ENCODE measurements at regions of chr3 and their contacts with region 1.

Region 1: DNA sequence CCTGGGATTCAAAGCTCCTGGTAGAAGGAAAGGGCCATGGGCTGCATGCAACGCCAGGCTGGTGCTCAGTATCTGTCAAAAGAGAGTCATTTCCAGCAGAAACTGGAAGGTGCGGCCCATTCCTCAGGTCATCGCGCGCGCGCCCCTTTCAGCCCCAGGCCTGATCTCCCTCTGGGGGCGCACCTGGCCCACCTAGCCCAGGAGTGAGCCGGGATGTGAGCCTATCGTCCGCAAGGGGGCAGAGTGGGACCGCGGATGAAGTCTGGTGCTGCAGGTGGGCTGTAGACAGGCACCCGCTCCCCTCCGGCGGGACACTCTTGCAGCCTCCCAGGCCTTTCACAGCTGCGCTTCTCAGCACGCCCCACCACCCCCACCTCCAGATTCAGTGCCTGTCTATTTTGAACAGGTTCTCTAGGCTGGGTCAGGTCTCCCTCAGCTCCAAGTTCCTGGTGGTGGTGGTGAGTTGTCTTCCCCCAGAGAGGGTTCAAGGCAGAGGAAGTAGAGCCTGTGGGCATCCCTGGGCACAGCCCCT is 5.8 kb upstream of the RPL29 start:
- DNase-seq: peak; percentile 92
- H3K4me3 Mint-ChIP-seq: no peak overlapping the region
- H3K27ac Mint-ChIP-seq: no peak overlapping the region
- H3K4me1 Mint-ChIP-seq: peaks cover 25% of the 10 kb centered on the region
- H3K27me3 Mint-ChIP-seq: peaks cover 72% of the 10 kb centered on the region

Region 2: DNA sequence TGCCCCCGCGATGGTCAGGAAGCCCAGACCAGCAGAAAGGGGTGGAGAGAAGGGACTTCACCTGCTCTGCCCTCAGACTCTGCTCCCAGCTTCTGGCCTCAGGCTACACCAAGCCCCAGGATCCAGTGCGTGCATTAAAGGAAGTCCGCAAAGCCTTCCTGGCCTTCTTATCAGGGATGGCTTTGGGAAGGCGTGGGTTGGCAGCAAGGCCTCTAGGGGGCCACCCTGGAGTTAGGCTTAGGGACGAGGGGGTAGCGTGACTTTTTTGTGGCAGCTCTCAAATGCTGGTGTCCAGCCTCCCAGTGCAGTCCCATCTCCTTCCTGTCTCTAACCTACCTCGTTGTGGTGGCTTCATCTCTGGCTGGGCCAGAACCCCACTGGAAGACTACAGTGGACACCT is 13.1 kb after region 1 on chr3:
- CTCF ChIA-PET with region 1: interaction called, 15 read pairs
- DNase-seq: no peak
- H3K4me3 Mint-ChIP-seq: no peak overlapping the region
- H3K27ac Mint-ChIP-seq: no peak overlapping the region
- H3K4me1 Mint-ChIP-seq: no peaks in the 10 kb centered on the region
- H3K27me3 Mint-ChIP-seq: peaks cover 7% of the 10 kb centered on the region

Region 3: DNA sequence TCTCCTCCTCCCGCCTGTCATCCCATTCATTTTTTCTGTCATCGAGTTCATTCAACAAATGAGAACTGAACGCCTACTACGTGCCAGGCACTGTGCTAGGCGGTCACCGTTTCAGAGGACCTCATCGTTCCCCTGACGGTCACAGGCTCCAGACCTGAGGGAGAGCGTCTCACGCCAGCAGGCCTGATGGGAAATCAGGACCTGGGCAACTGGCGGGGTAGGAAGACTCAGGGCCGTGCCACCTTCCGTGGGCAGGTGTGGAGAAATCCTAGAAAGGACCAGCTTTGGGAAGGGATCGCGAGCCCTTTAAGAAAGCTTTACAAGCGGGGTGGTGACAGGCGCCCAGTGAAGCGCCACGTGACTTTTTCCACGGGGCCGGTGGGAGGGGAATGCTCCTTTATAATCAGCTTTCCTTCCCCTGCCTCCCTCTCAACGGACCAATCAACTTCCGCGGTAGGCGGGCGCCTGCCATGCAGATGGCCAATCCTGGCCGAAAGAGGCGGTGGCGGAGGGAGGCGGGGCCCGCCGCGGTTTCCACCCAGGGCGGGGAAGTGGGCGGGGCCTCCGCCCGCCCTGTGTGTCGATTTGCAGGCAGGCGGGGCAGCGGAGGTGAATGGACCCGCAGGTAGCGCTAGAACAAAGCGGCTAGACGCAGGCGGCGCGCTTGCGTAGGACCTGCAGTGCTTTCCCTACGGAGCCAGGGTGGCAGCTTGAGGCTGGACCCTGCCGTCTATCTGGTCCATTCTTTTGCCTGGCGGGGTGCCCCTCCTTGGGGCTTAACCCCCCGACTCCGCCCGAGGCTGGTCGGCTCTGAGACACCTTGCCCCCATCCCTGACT is 55.7 kb after region 1 on chr3:
- CTCF ChIA-PET with region 1: interaction called, 62 read pairs
- DNase-seq: peak; percentile 100
- H3K4me3 Mint-ChIP-seq: peak overlapping the region; percentile 86
- H3K27ac Mint-ChIP-seq: peak overlapping the region; percentile 95
- H3K4me1 Mint-ChIP-seq: peaks cover 40% of the 10 kb centered on the region
- H3K27me3 Mint-ChIP-seq: peaks cover 9% of the 10 kb centered on the region

Region 4: GRCh38 chr3:52123106-52123725 is 121.7 kb after region 1 on chr3:
- CTCF ChIA-PET with region 1: interaction called, 135 read pairs
- DNase-seq: peak; percentile 81
- H3K4me3 Mint-ChIP-seq: no peak overlapping the region
- H3K27ac Mint-ChIP-seq: no peak overlapping the region
- H3K4me1 Mint-ChIP-seq: peaks cover 25% of the 10 kb centered on the region
- H3K27me3 Mint-ChIP-seq: no peaks in the 10 kb centered on the region

Region 5: DNA sequence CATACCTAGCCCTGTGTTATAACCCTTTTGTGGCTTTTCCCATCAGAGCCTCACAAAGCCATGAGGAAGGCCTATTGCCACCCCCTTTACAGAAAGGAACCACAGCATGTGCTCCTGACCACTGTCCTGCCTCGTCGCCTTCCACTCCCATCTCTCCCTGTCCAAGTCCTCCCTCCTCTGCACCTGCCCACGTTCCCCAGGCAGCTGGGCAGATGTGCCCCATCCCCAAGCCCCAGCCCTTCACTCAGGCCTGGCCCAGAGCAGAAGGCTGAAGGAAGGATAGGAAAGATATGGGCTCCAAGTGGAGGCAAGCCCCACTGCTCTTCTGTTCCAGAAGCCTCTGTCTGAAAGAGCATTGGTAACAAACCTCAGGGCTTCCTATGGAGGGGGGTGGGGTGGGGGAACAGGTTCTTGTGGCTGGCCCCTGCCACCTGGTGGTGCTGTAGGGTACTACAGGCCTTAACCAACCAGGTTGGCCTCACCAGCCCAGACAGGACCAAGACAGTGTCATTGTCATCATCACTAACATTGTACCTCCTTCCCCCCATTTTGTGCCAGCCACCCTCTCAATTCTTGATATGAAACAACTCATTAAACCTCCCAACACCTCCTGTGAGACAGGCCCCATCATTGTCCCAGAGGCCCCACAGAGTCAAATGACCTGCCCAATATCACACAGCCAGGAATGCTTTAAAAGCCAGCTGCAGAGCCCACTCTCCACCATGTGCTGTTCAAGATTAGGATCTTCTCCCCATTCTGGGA is 142.7 kb after region 1 on chr3:
- CTCF ChIA-PET with region 1: interaction called, 111 read pairs
- DNase-seq: peak; percentile 93
- H3K4me3 Mint-ChIP-seq: no peak overlapping the region
- H3K27ac Mint-ChIP-seq: no peak overlapping the region
- H3K4me1 Mint-ChIP-seq: peaks cover 14% of the 10 kb centered on the region
- H3K27me3 Mint-ChIP-seq: no peaks in the 10 kb centered on the region

Region 6: DNA sequence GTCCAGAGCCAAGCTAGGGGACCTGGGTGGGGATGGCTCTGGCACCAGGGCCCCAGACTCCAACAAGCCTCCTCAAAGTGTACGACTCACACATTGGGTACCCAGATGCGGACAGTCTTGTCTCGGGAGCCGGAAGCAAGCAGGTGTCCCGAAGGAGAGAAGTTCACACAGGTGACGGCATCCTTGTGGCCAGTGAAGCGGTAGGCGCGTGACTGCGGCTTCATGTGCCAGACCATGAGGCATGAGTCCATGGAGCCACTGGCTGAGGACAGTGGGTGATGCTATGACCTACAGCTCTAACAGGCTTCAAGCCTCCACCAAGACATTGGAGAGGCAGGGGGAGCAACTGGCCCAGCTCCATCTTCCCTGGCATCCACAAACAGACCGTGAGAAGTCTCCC is 148.2 kb after region 1 on chr3:
- CTCF ChIA-PET with region 1: interaction called, 111 read pairs
- DNase-seq: no peak
- H3K4me3 Mint-ChIP-seq: no peak overlapping the region
- H3K27ac Mint-ChIP-seq: no peak overlapping the region
- H3K4me1 Mint-ChIP-seq: peaks cover 20% of the 10 kb centered on the region
- H3K27me3 Mint-ChIP-seq: no peaks in the 10 kb centered on the region

Region 7: GRCh38 chr3:52245322-52246263 is 244.1 kb after region 1 on chr3 and contains the start of gene PPM1M:
- CTCF ChIA-PET with region 1: no interaction called
- DNase-seq: peak; percentile 75
- H3K4me3 Mint-ChIP-seq: peak within 1 kb of the TSS; percentile 87
- H3K27ac Mint-ChIP-seq: peak within 1 kb of the TSS; percentile 92
- H3K4me1 Mint-ChIP-seq: peaks cover 88% of the 10 kb centered on the region
- H3K27me3 Mint-ChIP-seq: no peaks in the 10 kb centered on the region

Region 8: GRCh38 chr3:52406231-52406661 is 404.7 kb after region 1 on chr3:
- CTCF ChIA-PET with region 1: no interaction called
- DNase-seq: no peak
- H3K4me3 Mint-ChIP-seq: no peak overlapping the region
- H3K27ac Mint-ChIP-seq: peak overlapping the region; percentile 19
- H3K4me1 Mint-ChIP-seq: peaks cover 18% of the 10 kb centered on the region
- H3K27me3 Mint-ChIP-seq: peaks cover 4% of the 10 kb centered on the region

Region 9: GRCh38 chr3:52633786-52634185 is 632.3 kb after region 1 on chr3:
- CTCF ChIA-PET with region 1: no interaction called
- DNase-seq: no peak
- H3K4me3 Mint-ChIP-seq: no peak overlapping the region
- H3K27ac Mint-ChIP-seq: no peak overlapping the region
- H3K4me1 Mint-ChIP-seq: no peaks in the 10 kb centered on the region
- H3K27me3 Mint-ChIP-seq: no peaks in the 10 kb centered on the region

Measured in activated naive CD4-positive, alpha-beta T cell treated with anti-CD3 and anti-CD28 coated beads, Interleukin-2, amount 10 ng/mL, durations not matched to agents 7 days and 5 days (primary cell).